ENCODE measurements at regions of chr12 and their contacts with region 1.

Region 1: GRCh38 chr12:31896514-31897039 is 62.6 kb upstream of the RESF1 start:
- DNase-seq: peak; percentile 96
- ATAC-seq: peak; percentile 91
- H3K4me3 ChIP-seq: peak overlapping the region in 2 of 5 experiments; percentile 11 to 60
- H3K4me3 Mint-ChIP-seq: peak overlapping the region; percentile 72
- H3K27ac ChIP-seq: peak overlapping the region; percentile 89 to 96
- H3K27ac Mint-ChIP-seq: peak overlapping the region; percentile 91
- H3K4me1 ChIP-seq: peaks cover 42 to 55% of the 10 kb centered on the region in 2 donors
- H3K4me1 Mint-ChIP-seq: peaks cover 52% of the 10 kb centered on the region
- H3K27me3 ChIP-seq: no peaks in the 10 kb centered on the region
- H3K27me3 Mint-ChIP-seq: no peaks in the 10 kb centered on the region
- CTCF ChIP-seq: no peak

Region 2: DNA sequence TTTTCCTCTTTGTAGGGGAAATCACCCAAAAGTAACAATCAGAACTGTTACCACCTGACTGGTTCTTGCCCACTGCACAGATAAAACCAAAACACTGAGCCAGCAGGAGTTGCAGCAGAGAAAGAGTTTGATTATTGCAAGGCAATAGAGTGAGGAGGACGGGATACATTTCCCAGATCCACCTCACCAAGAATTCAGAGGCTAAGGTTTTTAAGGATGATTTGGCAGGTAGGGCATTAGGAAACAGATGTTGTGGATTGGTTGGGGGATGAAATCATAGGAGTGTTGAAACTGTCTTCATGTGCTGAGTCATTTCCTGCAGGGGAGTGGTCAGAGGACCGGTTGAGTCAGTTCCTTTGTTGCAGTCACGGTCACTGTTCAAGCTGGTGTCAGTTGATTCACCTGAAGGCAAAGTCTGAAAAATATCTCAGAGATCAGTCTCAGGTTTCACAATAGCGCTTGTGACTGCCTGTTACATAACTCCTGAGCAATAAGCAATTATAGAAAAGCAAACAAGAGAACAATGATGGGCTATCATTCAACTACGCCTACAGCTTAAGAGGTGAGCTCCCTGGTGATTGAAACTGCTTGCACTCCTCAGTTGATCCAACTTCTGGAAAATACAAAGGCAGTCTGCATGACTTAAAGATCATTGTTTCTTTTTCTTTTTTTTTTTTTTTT is 147.4 kb before region 1 on chr12:
- CTCF ChIA-PET with region 1: interaction called, 4 read pairs
- POLR2A ChIA-PET with region 1: interaction called, 6 read pairs
- intact Hi-C with region 1: loop called (anchors 1 kb)
- DNase-seq: peak; percentile 67
- ATAC-seq: peak; percentile 70
- H3K4me3 ChIP-seq: peak overlapping the region in 2 of 5 experiments; percentile 1 to 26
- H3K4me3 Mint-ChIP-seq: peak overlapping the region; percentile 79
- H3K27ac ChIP-seq: peak overlapping the region; percentile 50 to 76
- H3K27ac Mint-ChIP-seq: peak overlapping the region; percentile 87
- H3K4me1 ChIP-seq: peaks cover 73 to 76% of the 10 kb centered on the region in 2 donors
- H3K4me1 Mint-ChIP-seq: peaks cover 72% of the 10 kb centered on the region
- H3K27me3 ChIP-seq: no peaks in the 10 kb centered on the region
- H3K27me3 Mint-ChIP-seq: no peaks in the 10 kb centered on the region
- CTCF ChIP-seq: no peak

Region 3: DNA sequence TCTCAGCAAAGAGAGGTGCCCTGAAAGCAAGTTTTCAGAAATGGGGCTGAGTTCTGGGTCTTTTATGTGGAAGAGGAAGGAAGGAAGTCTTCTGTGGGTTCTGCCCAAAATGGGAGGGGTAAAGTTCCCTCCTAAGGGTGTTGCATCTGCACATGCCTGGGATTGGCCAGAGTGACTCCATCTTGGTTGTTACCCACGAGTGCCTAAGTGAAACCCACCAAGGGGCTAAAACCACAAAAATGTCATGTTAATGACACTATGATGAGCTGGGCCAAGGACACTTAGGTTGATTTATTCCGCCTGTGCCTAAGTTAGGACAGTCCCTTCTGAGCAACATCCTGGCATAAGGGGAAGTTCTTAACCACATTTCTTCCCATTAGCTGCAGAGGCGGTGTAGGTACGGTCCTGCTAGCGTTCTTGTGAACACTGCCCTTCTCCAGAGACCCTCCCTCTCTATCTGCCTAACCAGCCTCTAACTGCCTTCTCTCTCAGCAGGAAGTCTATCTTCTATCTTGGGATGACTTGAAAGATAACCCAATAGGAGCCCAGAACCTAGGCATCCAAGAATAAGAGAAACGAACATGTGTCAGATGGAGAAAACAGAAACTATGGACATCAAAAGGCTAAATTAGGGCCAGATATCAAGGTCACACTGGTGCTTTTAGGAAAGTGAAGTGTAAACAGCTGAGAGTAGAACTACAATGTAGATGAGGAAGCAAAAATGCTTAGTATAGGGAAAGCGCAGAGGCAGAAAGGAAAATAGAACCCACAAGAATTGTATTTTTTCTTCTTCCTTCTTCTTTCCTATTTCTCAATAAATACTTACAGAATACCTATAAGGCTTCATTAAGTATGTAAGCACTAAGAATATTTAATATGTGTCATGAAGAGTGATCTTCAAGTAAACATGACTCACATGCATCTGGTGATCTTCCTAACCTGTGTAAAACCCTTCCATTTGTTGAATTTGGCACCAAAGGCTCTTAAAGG is 63.5 kb before region 1 on chr12:
- CTCF ChIA-PET with region 1: interaction called, 5 read pairs
- POLR2A ChIA-PET with region 1: interaction called, 8 read pairs
- intact Hi-C with region 1: loop called (anchors 1 kb)
- DNase-seq: peak; percentile 84
- ATAC-seq: peak; percentile 80
- H3K4me3 ChIP-seq: peak overlapping the region in 1 of 5 experiments; percentile 47
- H3K4me3 Mint-ChIP-seq: peak overlapping the region; percentile 82
- H3K27ac ChIP-seq: peak overlapping the region; percentile 65 to 78
- H3K27ac Mint-ChIP-seq: peak overlapping the region; percentile 96
- H3K4me1 ChIP-seq: peaks cover 58 to 70% of the 10 kb centered on the region in 2 donors
- H3K4me1 Mint-ChIP-seq: peaks cover 70% of the 10 kb centered on the region
- H3K27me3 ChIP-seq: no peaks in the 10 kb centered on the region
- H3K27me3 Mint-ChIP-seq: no peaks in the 10 kb centered on the region
- CTCF ChIP-seq: no peak

Region 4: DNA sequence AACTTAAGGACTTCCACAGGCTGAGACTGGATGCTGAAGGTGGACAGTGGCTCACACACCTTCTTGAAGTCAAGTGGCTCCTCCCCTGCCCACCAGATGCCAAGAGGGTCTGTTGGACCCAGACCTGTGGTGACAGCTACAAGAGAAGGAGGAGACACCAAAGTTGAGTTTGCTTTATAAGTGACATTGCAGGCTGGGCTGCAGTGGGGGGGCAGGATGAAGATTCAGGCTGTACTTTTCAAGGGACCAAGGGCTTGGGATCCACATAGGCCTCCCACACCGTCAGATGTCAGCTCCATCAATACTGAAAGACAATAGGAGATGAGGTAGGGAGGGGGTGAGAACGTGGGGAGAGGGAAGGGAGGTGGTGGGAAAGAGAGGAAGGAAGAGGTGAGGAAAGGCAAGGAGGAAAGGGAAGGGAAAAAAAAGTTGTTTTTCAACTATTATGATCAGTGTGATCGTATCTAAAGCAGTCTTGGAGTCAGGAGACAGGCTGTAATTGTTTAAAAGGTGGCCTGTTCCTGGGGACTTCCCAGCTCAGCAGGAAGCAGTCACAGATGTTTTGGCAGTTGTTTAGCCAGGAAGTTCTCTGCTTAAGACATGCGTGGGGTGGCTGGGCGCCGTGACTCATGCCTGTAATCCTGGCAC is 21.5 kb before region 1 on chr12:
- CTCF ChIA-PET with region 1: interaction called, 9 read pairs
- POLR2A ChIA-PET with region 1: interaction called, 7 read pairs
- intact Hi-C with region 1: loop called (anchors 1 kb)
- DNase-seq: peak; percentile 88
- ATAC-seq: peak; percentile 83
- H3K4me3 ChIP-seq: peak overlapping the region in 4 of 5 experiments; percentile 3 to 42 (median 30)
- H3K4me3 Mint-ChIP-seq: peak overlapping the region; percentile 85
- H3K27ac ChIP-seq: peak overlapping the region; percentile 98 to 100
- H3K27ac Mint-ChIP-seq: peak overlapping the region; percentile 100
- H3K4me1 ChIP-seq: peaks cover 63 to 72% of the 10 kb centered on the region in 2 donors
- H3K4me1 Mint-ChIP-seq: peaks cover 75% of the 10 kb centered on the region
- H3K27me3 ChIP-seq: no peaks in the 10 kb centered on the region
- H3K27me3 Mint-ChIP-seq: no peaks in the 10 kb centered on the region
- CTCF ChIP-seq: no peak

Region 5: GRCh38 chr12:31959161-31959700 is 62.7 kb after region 1 on chr12 and contains the start of gene RESF1:
- CTCF ChIA-PET with region 1: interaction called, 5 read pairs
- POLR2A ChIA-PET with region 1: interaction called, 44 read pairs
- intact Hi-C with region 1: loop called (anchors 1 kb)
- DNase-seq: peak; percentile 91
- ATAC-seq: peak; percentile 85
- H3K4me3 ChIP-seq: peak within 1 kb of the TSS; percentile 65 to 98 (median 70)
- H3K4me3 Mint-ChIP-seq: peak within 1 kb of the TSS; percentile 96
- H3K27ac ChIP-seq: peak within 1 kb of the TSS; percentile 79 to 82
- H3K27ac Mint-ChIP-seq: peak within 1 kb of the TSS; percentile 96
- H3K4me1 ChIP-seq: peaks cover 49 to 50% of the 10 kb centered on the region in 2 donors
- H3K4me1 Mint-ChIP-seq: peaks cover 68% of the 10 kb centered on the region
- H3K27me3 ChIP-seq: no peaks in the 10 kb centered on the region
- H3K27me3 Mint-ChIP-seq: no peaks in the 10 kb centered on the region
- CTCF ChIP-seq: no peak
- total RNA-seq, gene RESF1: 350 and 352 TPM in 2 replicates

Measured in B cell (primary cell).